ENCODE measurements at regions of chr6 and their contacts with region 1.

Region 1: GRCh38 chr6:156925718-156926615 is 148.8 kb downstream of the ARID1B start:
- DNase-seq: no peak
- H3K4me3 Mint-ChIP-seq: no peak overlapping the region
- H3K27ac Mint-ChIP-seq: peak overlapping the region; percentile 47
- H3K4me1 Mint-ChIP-seq: peaks cover 33% of the 10 kb centered on the region
- H3K27me3 Mint-ChIP-seq: no peaks in the 10 kb centered on the region

Region 2: DNA sequence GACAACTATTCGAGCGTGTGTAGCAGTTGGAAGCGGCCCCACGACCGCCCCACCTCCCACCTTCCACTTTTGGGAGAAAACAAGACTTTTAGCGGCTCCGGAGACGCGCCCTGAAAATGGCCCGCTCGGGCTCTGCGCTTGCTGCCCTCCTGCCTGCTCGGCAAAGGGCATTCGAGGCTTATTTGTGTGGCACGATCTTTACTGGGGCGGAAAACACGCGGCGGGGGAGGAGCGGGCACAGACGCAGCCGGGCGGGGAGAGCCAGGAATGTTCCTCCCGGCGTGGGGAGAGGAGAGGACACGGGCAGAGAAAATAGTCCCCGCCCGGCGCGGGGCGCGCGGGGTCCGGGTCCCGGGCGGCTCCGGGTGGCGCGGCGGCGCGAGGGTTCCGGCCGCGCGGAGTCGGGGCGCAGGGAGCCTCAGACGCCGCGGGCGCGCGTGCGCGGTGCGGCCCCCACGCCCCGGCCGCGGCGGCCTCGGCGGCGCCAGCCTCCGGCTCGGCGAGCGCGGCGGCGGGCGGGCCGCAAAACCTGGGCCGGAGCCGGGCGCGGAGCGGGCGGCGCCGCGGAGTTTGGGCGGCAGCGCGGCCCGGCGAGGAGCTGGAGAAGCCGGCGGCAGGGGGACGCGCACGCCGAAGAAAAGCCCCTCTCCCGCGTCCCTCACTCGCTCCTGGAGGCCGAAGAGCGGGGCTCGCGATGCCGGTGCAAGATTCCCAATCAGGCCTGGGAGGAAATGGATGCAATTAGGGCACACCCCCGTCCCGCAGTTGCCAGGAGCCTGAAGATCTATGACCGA is 238.8 kb before region 1 on chr6:
- intact Hi-C with region 1: loop called (anchors 5 kb)
- DNase-seq: peak; percentile 75
- H3K4me3 Mint-ChIP-seq: peak overlapping the region; percentile 84
- H3K27ac Mint-ChIP-seq: peak overlapping the region; percentile 73
- H3K4me1 Mint-ChIP-seq: peaks cover 29% of the 10 kb centered on the region
- H3K27me3 Mint-ChIP-seq: peaks cover 24% of the 10 kb centered on the region